PC-9 (cell line): ENCODE measurements at regions of chr6 and their contacts with region 1.

Region 1: DNA sequence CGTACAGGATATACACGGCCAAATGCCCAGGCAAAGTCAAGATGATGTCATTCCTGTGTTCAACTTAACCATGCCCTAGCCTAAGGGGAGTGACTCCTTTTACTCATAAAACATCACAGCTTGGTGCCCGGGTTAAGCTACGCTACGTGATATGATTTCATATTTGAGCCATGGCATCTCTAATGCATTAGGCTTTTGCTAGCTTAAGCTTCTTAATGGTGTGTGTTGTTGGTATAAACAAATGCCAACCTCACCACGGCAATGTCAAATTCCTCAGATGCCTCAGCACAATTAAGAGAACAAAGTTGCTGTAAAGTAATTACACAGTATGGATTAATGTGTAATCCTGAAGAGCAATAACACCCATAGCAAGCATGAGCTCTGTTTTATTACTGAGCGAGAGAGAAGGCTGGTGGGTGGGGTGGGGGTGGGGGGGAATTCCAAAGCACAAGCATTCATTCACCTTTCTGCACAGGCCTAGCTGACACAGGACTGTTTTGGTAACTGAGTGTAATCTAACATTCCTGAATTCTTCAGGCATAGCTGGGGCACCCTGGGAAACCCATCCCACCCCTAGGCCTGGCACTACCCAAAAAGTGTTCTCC is 44.7 kb upstream of the CNKSR3 start:
- DNase-seq: peak; percentile 27 to 94
- H3K4me3 ChIP-seq: no peak overlapping the region
- H3K27ac ChIP-seq: no peak overlapping the region
- H3K4me1 ChIP-seq: peaks cover 22% of the 10 kb centered on the region
- H3K27me3 ChIP-seq: no peaks in the 10 kb centered on the region
- CTCF ChIP-seq: no peak

Region 2: GRCh38 chr6:154500769-154501577 is 54.2 kb before region 1 on chr6:
- CTCF ChIA-PET with region 1: interaction called, 10 read pairs
- POLR2A ChIA-PET with region 1: no interaction called
- intact Hi-C with region 1: no loop called
- DNase-seq: no peak
- H3K4me3 ChIP-seq: no peak overlapping the region
- H3K27ac ChIP-seq: no peak overlapping the region
- H3K4me1 ChIP-seq: no peaks in the 10 kb centered on the region
- H3K27me3 ChIP-seq: no peaks in the 10 kb centered on the region
- CTCF ChIP-seq: peak; percentile 50; the same call in 1 of the 2 replicates

Region 3: GRCh38 chr6:154824076-154824475 is 268.9 kb after region 1 on chr6:
- CTCF ChIA-PET with region 1: no interaction called
- POLR2A ChIA-PET with region 1: no interaction called
- intact Hi-C with region 1: no loop called
- DNase-seq: no peak
- H3K4me3 ChIP-seq: no peak overlapping the region
- H3K27ac ChIP-seq: no peak overlapping the region
- H3K4me1 ChIP-seq: no peaks in the 10 kb centered on the region
- H3K27me3 ChIP-seq: no peaks in the 10 kb centered on the region
- CTCF ChIP-seq: no peak